Endothelial cell of umbilical vein (primary cell): ENCODE measurements at regions of chr15 and their contacts with region 1.

Region 1: GRCh38 chr15:48336940-48337339 is 5.7 kb downstream of the DUT start:
- DNase-seq: peak; percentile 10
- H3K4me3 ChIP-seq: no peak overlapping the region
- H3K27ac ChIP-seq: no peak overlapping the region
- H3K4me1 ChIP-seq: peaks cover 13% of the 10 kb centered on the region
- H3K27me3 ChIP-seq: no peaks in the 10 kb centered on the region
- CTCF ChIP-seq: peak; percentile 15 to 21
- POLR2A ChIP-seq: no peak

Region 2: GRCh38 chr15:47577000-47577399 is 759.9 kb before region 1 on chr15:
- CTCF ChIA-PET with region 1: no interaction called
- POLR2A ChIA-PET with region 1: no interaction called
- dilution Hi-C with region 1: no loop called
- intact Hi-C with region 1: no loop called
- DNase-seq: no peak
- H3K4me3 ChIP-seq: no peak overlapping the region
- H3K27ac ChIP-seq: no peak overlapping the region
- H3K4me1 ChIP-seq: no peaks in the 10 kb centered on the region
- H3K27me3 ChIP-seq: no peaks in the 10 kb centered on the region
- CTCF ChIP-seq: no peak
- POLR2A ChIP-seq: no peak

Region 3: GRCh38 chr15:48352474-48353072 is 15.6 kb after region 1 on chr15:
- CTCF ChIA-PET with region 1: interaction called, 32 read pairs
- POLR2A ChIA-PET with region 1: no interaction called
- dilution Hi-C with region 1: no loop called
- intact Hi-C with region 1: no loop called
- DNase-seq: peak; percentile 67
- H3K4me3 ChIP-seq: no peak overlapping the region
- H3K27ac ChIP-seq: no peak overlapping the region
- H3K4me1 ChIP-seq: no peaks in the 10 kb centered on the region
- H3K27me3 ChIP-seq: no peaks in the 10 kb centered on the region
- CTCF ChIP-seq: peak; percentile 68 to 69
- POLR2A ChIP-seq: no peak

Region 4: DNA sequence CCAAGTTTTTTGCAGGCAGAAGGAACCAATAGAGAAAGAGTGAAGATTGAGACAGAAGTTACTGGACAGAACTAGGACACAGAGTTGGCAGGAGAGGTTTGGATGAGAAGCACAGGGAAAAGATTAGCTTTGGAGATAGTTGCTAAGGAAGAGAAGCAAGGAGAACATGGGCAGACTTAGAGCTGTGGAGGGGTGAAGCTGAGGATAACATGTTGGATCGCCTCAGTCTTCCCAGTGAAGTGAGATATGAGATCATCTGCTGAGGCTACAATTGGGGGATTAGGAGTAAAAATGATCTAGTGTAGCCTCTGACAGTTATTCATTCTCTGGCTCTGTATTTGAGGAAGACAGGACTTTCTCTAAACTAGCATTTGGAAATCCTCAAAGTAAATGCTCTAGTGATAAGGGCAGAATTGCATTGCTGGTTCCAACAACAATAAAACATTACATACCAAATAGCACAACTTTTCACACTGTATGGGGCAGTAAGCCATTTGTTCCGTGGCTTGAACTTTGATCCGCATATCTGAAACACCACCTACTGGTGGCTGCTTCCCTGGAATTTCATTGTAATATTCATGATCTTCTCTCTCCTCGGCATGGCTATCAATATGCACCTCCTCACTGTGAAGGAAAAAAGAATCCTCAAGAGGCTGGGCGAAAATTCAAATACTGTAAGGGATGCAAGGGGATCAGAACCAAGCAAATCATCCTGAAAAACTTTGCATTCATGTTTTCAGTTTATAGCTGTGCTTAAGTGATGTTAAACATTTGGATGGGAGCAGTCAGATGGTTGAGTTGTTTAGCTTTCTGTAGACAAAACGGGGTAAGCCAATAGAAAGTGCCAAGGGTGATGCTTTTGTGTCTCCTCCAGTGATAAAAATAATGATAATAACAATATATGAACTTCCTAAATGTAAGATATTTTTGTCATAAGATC is 518.8 kb after region 1 on chr15:
- CTCF ChIA-PET with region 1: interaction called, 12 read pairs
- POLR2A ChIA-PET with region 1: no interaction called
- dilution Hi-C with region 1: no loop called
- intact Hi-C with region 1: loop called (anchors 5 kb)
- DNase-seq: peak; percentile 61
- H3K4me3 ChIP-seq: no peak overlapping the region
- H3K27ac ChIP-seq: no peak overlapping the region
- H3K4me1 ChIP-seq: no peaks in the 10 kb centered on the region
- H3K27me3 ChIP-seq: no peaks in the 10 kb centered on the region
- CTCF ChIP-seq: peak; percentile 43 to 59
- POLR2A ChIP-seq: no peak